B cell (primary cell): ENCODE measurements at regions of chr20 and their contacts with region 1.

Region 1: DNA sequence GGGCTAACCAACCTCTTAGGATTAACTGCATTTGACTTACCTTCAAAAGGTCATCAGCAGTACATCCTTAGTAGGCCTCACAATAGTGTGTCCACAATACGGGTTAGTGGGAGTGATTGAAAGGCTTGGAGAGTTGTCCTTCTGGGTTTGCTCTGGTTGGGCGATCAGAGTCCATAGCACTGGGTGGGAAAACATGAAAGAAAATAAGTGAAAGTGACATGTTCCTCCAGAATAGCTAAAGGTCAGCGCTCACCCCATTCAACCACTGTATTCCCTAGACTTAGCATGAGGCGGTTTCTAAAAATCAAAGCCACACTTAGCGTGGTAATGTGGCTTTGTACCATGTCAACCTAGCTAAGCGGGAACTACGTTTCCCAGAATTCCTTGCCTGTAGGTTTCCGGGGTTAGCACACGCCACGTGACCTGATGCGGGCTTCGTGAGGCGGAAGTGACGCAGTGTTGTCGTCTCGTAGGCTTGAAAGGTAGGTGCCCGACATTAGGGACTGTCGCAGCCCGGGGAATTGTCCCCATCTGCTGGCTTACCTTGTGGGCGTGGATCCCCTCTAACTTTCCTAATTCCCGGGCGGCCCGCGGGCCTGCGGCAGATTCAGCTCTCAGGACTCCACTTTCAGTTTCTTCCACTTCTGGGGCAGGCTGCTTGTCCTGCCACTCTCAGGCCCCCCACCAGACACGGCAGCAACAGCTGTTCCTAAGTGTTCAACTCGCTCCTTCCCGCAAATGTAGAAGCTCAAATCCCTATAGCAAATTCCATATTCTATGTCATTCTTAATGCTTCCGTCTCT is 19.8 kb upstream of the SCP2D1 start:
- DNase-seq: peak; percentile 95
- ATAC-seq: peak; percentile 94
- H3K4me3 ChIP-seq: peak overlapping the region; percentile 69 to 86 (median 73)
- H3K4me3 Mint-ChIP-seq: peak overlapping the region; percentile 97
- H3K27ac ChIP-seq: peak overlapping the region; percentile 90 to 93
- H3K27ac Mint-ChIP-seq: peak overlapping the region; percentile 99
- H3K4me1 ChIP-seq: peaks cover 6 to 14% of the 10 kb centered on the region in 2 donors
- H3K4me1 Mint-ChIP-seq: peaks cover 20% of the 10 kb centered on the region
- H3K27me3 ChIP-seq: peaks cover 0 to 8% (median 2%) of the 10 kb centered on the region in 4 experiments
- H3K27me3 Mint-ChIP-seq: peaks cover 16% of the 10 kb centered on the region
- CTCF ChIP-seq: peak; percentile 24

Region 2: DNA sequence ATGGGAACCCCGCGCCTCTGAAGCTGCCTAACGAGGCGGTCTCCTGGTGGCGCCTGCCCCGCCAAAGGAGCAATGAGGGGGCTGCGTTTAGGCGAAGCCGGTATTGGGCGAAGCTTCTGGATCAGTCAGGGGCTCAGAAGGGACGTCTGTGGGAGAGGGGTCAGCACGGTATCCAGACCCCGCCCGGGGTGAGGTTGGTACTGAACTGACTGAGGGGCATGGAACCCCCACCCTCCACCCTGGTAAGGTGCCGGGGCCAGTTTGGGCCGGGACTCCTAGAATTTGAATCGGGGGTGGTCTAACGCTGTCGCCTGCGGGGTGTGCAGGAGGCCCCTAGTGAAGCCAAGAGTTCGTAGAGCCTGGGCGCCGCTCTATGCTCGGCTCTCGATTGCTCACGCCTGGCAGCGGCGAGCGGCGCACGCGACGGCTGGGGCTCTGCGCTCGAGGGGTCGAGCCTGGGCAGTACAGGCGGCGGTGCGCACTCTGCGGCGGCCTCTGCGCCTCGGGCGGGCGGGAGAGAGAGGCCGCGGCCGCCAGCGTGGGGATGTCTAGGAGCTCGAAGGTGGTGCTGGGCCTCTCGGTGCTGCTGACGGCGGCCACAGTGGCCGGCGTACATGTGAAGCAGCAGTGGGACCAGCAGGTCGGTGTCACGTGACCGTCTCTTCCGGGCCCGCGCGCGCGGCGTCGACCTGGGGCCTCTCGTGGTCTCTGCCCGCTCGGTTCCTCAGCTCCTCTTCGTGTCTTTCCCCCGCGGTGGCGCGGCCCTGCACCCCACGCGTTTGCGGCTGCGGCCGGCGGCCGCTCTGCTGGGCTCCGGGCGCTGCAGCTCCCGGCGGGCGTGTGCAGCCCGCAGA is 656.2 kb before region 1 on chr20 and contains the starts of genes KAT14 and PET117:
- CTCF ChIA-PET with region 1: no interaction called
- POLR2A ChIA-PET with region 1: no interaction called
- intact Hi-C with region 1: loop called (anchors 5 kb)
- DNase-seq: peak; percentile 97
- ATAC-seq: peak; percentile 88
- H3K4me3 ChIP-seq: peak within 1 kb of the TSS; percentile 48 to 93 (median 85)
- H3K4me3 Mint-ChIP-seq: peak within 1 kb of the TSS; percentile 92
- H3K27ac ChIP-seq: peak within 1 kb of the TSS; percentile 65 to 77
- H3K27ac Mint-ChIP-seq: peak within 1 kb of the TSS; percentile 95
- H3K4me1 ChIP-seq: peaks cover 15 to 25% of the 10 kb centered on the region in 2 donors
- H3K4me1 Mint-ChIP-seq: peaks cover 27% of the 10 kb centered on the region
- H3K27me3 ChIP-seq: peaks cover 0 to 4% (median 0%) of the 10 kb centered on the region in 4 experiments
- H3K27me3 Mint-ChIP-seq: no peaks in the 10 kb centered on the region
- CTCF ChIP-seq: no peak
- total RNA-seq, gene KAT14: 15.1 and 15.5 TPM in 2 replicates
- total RNA-seq, gene PET117: 10.7 and 13.0 TPM in 2 replicates

Region 3: DNA sequence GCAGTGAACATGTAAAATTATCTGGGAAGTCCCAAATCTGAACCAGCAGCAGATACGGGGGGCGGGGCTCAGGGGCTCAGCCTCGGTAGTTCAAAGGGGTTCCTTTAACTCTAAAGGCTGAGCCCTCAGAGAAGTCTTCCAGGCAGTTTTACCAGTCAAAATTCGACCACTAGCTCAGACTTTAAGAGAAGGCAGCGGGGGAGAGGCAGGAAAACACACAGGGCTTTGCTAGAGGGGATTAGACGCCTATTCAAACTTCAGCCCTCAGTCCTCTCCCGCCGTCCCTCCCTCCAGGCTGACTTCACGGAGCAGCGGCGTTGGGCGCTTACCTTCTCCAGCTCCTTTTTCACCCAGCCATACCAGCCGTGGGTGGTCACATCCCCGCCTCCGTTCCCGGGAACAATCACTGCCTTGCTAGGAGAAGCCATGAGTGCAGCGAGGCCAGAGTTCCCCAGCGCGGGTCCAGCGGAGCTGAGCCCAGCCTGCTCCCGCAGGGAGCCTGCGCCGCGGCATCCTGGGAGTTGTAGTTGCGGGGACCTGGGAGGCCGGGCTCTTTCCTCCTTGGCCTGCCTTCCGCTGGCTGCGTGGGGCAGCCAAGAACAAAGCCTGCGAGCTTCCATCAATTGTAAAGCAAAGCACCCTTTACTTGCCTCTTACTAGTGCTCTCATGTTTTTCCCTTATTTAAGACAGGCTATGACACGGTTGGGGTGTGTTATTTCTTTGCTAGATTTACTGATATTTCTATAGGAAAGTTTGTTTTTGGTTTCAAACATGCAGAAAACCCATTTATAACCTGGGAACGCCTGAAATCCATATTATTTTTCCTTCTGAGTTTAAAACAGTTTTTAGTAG is 296.9 kb before region 1 on chr20 and contains the start of gene RBBP9:
- CTCF ChIA-PET with region 1: no interaction called
- POLR2A ChIA-PET with region 1: no interaction called
- intact Hi-C with region 1: loop called (anchors 1 kb)
- DNase-seq: peak; percentile 81
- ATAC-seq: peak; percentile 100
- H3K4me3 ChIP-seq: peak within 1 kb of the TSS; percentile 74 to 96 (median 87)
- H3K4me3 Mint-ChIP-seq: peak within 1 kb of the TSS; percentile 98
- H3K27ac ChIP-seq: peak within 1 kb of the TSS; percentile 38 to 78
- H3K27ac Mint-ChIP-seq: peak within 1 kb of the TSS; percentile 89
- H3K4me1 ChIP-seq: peaks cover 7 to 11% of the 10 kb centered on the region in 2 donors
- H3K4me1 Mint-ChIP-seq: peaks cover 18% of the 10 kb centered on the region
- H3K27me3 ChIP-seq: no peaks in the 10 kb centered on the region
- H3K27me3 Mint-ChIP-seq: peaks cover 3% of the 10 kb centered on the region
- CTCF ChIP-seq: no peak
- total RNA-seq, gene RBBP9: 9.3 and 10.2 TPM in 2 replicates

Region 4: DNA sequence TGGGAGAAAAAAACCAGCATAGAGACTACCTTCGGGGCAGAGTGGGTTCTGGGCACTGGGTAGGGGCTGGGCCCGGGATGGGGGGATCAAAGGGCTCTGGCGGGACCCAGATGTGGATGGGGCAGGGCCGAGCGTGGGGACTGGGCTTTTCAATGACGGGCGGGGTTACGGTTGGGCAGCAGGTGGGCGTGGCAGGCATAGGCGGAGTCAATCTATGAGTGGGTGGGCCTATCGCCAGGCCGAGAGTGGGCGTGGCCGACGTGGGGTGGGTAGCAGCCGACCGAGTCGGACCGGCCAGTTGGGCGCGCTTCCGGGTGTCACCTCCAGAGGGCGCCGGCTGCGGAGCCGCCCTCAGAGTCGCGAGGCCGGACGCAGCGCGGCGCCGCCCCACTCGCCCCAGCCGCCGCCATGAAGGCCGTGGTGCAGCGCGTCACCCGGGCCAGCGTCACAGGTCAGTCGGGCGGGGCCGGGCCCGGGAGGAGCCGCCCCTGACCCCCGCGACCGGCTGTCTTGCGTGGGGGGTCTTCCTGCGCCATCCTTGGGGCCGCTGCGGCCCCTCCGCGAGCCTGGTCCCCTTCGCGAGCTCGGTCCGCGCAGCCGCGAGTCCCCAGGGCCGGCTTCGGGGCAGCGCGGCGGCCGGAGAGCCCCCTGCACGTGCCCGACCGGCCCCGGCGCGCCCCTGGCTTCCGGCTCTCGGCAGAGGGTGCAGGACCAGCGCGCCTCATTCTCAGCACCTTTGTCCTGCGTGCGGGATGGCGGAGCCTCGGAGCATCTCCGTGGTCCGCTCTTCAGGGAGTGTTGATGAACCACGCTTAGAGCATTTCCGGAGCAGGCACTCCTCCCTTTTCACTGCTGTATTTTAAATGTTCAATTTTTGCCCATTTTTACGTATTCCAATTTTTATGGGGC is 205.9 kb before region 1 on chr20 and contains the start of gene DTD1:
- CTCF ChIA-PET with region 1: no interaction called
- POLR2A ChIA-PET with region 1: no interaction called
- intact Hi-C with region 1: loop called (anchors 1 kb)
- DNase-seq: peak; percentile 89
- ATAC-seq: peak; percentile 96
- H3K4me3 ChIP-seq: peak within 1 kb of the TSS; percentile 47 to 77 (median 73)
- H3K4me3 Mint-ChIP-seq: peak within 1 kb of the TSS; percentile 94
- H3K27ac ChIP-seq: peak within 1 kb of the TSS; percentile 44 to 58
- H3K27ac Mint-ChIP-seq: peak within 1 kb of the TSS; percentile 86
- H3K4me1 ChIP-seq: peaks cover 17% of the 10 kb centered on the region in 2 donors
- H3K4me1 Mint-ChIP-seq: peaks cover 23% of the 10 kb centered on the region
- H3K27me3 ChIP-seq: peaks cover 0 to 10% (median 2%) of the 10 kb centered on the region in 4 experiments
- H3K27me3 Mint-ChIP-seq: peaks cover 8% of the 10 kb centered on the region
- CTCF ChIP-seq: peak; percentile 68
- total RNA-seq, gene DTD1: 18.7 and 18.9 TPM in 2 replicates

Region 5: GRCh38 chr20:18805881-18806280 is 12.1 kb after region 1 on chr20:
- CTCF ChIA-PET with region 1: no interaction called
- POLR2A ChIA-PET with region 1: interaction called, 11 read pairs
- intact Hi-C with region 1: no loop called
- DNase-seq: no peak
- ATAC-seq: no peak
- H3K4me3 ChIP-seq: no peak overlapping the region
- H3K4me3 Mint-ChIP-seq: no peak overlapping the region
- H3K27ac ChIP-seq: no peak overlapping the region
- H3K27ac Mint-ChIP-seq: no peak overlapping the region
- H3K4me1 ChIP-seq: peaks cover 0 to 3% of the 10 kb centered on the region in 2 donors
- H3K4me1 Mint-ChIP-seq: peaks cover 4% of the 10 kb centered on the region
- H3K27me3 ChIP-seq: no peaks in the 10 kb centered on the region
- H3K27me3 Mint-ChIP-seq: no peaks in the 10 kb centered on the region
- CTCF ChIP-seq: no peak

Region 6: DNA sequence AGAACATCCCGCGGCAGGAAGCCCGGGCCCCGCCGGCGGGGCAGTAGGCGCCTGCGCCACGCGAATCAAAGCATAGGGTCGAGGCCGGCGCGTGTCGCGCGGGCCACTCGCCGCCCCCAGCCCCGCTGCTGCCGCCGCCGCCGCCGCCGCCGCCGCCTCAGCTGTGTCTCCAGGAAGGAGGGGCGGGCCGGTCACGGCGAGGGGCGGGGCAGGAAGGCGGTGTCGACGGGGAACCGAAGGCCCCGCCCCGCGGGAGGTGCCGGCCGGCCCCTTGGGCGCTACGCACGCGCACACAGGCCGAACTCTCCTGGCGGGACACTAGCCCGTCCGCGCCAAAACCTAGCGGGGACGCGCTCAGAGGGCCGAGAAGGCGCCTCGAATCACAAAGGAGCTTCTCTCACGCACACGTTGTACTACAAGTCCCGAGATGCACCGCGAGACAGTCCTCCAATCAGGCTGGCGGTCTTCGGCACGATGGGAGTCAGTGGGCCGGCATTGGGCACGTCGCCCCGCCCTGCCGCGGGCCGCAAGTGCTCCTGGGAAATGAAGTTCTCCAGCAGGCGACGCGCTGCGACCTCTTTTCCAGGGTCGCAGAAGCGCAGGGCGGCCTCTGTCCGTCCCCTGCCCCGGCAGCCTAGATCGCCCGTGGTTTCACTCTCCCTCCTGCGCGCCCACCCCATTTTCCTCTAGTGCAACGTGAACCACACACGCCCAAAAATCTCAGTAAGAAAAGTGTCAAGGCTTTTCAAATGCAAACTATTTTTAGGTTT is 1918.8 kb after region 1 on chr20 and contains the start of gene RALGAPA2:
- CTCF ChIA-PET with region 1: no interaction called
- POLR2A ChIA-PET with region 1: no interaction called
- intact Hi-C with region 1: loop called (anchors 10 kb)
- DNase-seq: peak; percentile 97
- ATAC-seq: peak; percentile 95
- H3K4me3 ChIP-seq: peak within 1 kb of the TSS; percentile 78 to 96 (median 91)
- H3K4me3 Mint-ChIP-seq: peak within 1 kb of the TSS; percentile 95
- H3K27ac ChIP-seq: peak within 1 kb of the TSS; percentile 90 to 96
- H3K27ac Mint-ChIP-seq: peak within 1 kb of the TSS; percentile 97
- H3K4me1 ChIP-seq: peaks cover 19 to 20% of the 10 kb centered on the region in 2 donors
- H3K4me1 Mint-ChIP-seq: peaks cover 25% of the 10 kb centered on the region
- H3K27me3 ChIP-seq: peaks cover 0 to 3% (median 0%) of the 10 kb centered on the region in 4 experiments
- H3K27me3 Mint-ChIP-seq: no peaks in the 10 kb centered on the region
- CTCF ChIP-seq: no peak
- total RNA-seq, gene RALGAPA2: 32.2 and 33.1 TPM in 2 replicates